ENCODE measurements at regions of chr1 and their contacts with region 1.

Region 1: GRCh38 chr1:92882819-92883218 is 51.0 kb downstream of the RPL5 start:
- DNase-seq: peak; percentile 94
- H3K4me3 ChIP-seq: no peak overlapping the region
- H3K27ac ChIP-seq: peak overlapping the region; percentile 58
- H3K4me1 ChIP-seq: peaks cover 25% of the 10 kb centered on the region
- H3K27me3 ChIP-seq: no peaks in the 10 kb centered on the region
- CTCF ChIP-seq: no peak

Region 2: GRCh38 chr1:92916902-92917301 is 34.1 kb after region 1 on chr1:
- CTCF ChIA-PET with region 1: no interaction called
- POLR2A ChIA-PET with region 1: interaction called, 6 read pairs
- intact Hi-C with region 1: loop called (anchors 1 kb)
- DNase-seq: no peak
- H3K4me3 ChIP-seq: no peak overlapping the region
- H3K27ac ChIP-seq: no peak overlapping the region
- H3K4me1 ChIP-seq: no peaks in the 10 kb centered on the region
- H3K27me3 ChIP-seq: no peaks in the 10 kb centered on the region
- CTCF ChIP-seq: no peak

Region 3: GRCh38 chr1:92960395-92961130 is 77.7 kb after region 1 on chr1:
- CTCF ChIA-PET with region 1: interaction called, 3 read pairs
- POLR2A ChIA-PET with region 1: no interaction called
- intact Hi-C with region 1: loop called (anchors 5 kb)
- DNase-seq: peak; percentile 91
- H3K4me3 ChIP-seq: peak overlapping the region; percentile 88
- H3K27ac ChIP-seq: peak overlapping the region; percentile 76
- H3K4me1 ChIP-seq: peaks cover 21% of the 10 kb centered on the region
- H3K27me3 ChIP-seq: no peaks in the 10 kb centered on the region
- CTCF ChIP-seq: peak; percentile 85

Measured in A673 (cell line).